RWPE1 (cell line): ENCODE measurements at regions of chr5 and their contacts with region 1.

Region 1: GRCh38 chr5:62431735-62432620 is 19.4 kb downstream of the IPO11 start:
- DNase-seq: no peak
- H3K27ac ChIP-seq: no peak overlapping the region
- CTCF ChIP-seq: no peak

Region 2: GRCh38 chr5:62371409-62371808 is 60.6 kb before region 1 on chr5:
- CTCF ChIA-PET with region 1: no interaction called
- POLR2A ChIA-PET with region 1: no interaction called
- DNase-seq: no peak
- H3K27ac ChIP-seq: no peak overlapping the region
- CTCF ChIP-seq: no peak

Region 3: DNA sequence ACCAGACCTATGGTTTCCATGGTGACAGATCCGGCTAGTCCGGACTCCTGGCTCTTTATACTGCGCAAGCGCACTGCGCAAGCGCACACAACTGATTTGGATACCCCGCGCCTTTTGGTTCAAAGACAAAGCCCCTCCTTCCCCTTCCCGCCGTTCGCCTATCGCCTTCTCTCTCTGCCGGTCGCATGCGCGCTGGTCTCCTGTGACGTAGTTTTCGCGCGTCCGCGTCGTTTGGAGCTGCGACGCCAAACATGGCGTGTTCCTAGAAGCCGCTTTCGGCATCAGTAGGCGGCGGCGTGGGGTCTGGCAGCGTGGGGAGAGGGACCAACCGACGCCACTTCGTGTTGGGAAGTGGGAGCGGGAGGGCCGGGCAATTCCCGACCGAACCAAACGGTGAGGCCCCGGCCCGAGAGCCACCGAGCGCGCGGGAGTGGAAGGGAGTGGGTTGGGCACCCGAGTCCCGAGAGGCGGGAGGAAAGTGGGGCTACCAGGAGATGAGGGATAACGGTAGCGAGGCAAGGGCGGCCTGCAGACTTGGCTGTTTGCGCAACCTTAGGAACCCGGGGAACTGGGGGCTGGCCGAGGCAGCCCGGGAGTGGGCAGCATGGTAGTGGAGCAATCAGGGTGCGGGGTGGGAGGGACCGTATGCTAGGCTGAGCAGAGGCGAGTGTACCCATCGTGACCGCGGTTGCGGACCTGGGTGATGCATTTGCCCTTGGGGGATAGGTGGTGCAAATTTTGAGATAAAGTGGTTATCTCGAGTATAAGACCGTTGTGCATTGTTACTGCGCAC is 19.2 kb before region 1 on chr5 and contains the start of gene IPO11:
- CTCF ChIA-PET with region 1: no interaction called
- POLR2A ChIA-PET with region 1: no interaction called
- DNase-seq: peak; percentile 99
- H3K27ac ChIP-seq: peak within 1 kb of the TSS; percentile 67
- CTCF ChIP-seq: no peak

Region 4: GRCh38 chr5:62448528-62448927 is 16.6 kb after region 1 on chr5:
- CTCF ChIA-PET with region 1: interaction called, 12 read pairs
- POLR2A ChIA-PET with region 1: no interaction called
- DNase-seq: no peak
- H3K27ac ChIP-seq: no peak overlapping the region
- CTCF ChIP-seq: no peak

Region 5: DNA sequence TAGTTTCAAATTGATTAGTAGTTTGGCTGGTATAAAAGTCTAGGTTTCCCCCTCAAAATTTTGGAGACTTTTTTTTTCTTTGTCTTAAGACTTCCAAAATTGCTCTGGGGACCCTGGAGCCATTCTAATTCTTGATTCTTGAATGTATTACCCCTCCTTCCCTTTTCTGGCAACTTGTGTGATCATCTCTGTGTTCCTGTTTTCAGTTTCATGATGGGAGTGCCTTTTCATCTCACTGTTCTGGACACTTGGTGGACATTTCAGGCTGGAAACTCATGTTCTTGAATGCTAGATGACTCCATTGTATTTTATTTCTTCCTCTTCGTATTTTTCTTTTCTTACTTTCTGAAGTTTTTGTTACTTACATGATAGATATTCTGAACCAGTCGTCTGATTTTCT is 89.3 kb after region 1 on chr5:
- CTCF ChIA-PET with region 1: no interaction called
- POLR2A ChIA-PET with region 1: no interaction called
- DNase-seq: no peak
- H3K27ac ChIP-seq: no peak overlapping the region
- CTCF ChIP-seq: no peak

Region 6: GRCh38 chr5:62689599-62690368 is 257.8 kb after region 1 on chr5:
- CTCF ChIA-PET with region 1: no interaction called
- POLR2A ChIA-PET with region 1: no interaction called
- DNase-seq: no peak
- H3K27ac ChIP-seq: no peak overlapping the region
- CTCF ChIP-seq: no peak